PC-9 (cell line): ENCODE measurements at regions of chr7 and their contacts with region 1.

Region 1: DNA sequence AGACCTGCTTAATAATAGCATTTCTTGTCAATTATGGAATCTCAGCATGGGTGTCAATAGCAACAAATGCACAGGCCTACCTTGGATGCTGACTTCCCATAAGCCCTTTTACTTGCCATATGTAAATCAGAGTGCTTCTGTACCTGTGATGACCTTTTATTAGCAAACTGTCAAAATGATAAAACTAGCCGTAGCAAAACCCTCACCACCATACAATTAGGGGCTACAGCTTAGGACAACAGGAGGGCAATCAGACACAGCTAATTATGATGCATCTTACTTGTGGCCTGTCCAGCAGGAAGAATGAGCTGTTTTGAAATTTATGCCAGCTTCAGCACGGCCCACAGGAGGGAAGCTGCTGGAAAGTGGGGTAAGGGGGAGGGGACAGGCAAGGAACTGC is 201.6 kb downstream of the TAX1BP1 start:
- DNase-seq: no peak
- H3K4me3 ChIP-seq: no peak overlapping the region
- H3K27ac ChIP-seq: no peak overlapping the region
- H3K4me1 ChIP-seq: no peaks in the 10 kb centered on the region
- H3K27me3 ChIP-seq: no peaks in the 10 kb centered on the region
- CTCF ChIP-seq: no peak

Region 2: DNA sequence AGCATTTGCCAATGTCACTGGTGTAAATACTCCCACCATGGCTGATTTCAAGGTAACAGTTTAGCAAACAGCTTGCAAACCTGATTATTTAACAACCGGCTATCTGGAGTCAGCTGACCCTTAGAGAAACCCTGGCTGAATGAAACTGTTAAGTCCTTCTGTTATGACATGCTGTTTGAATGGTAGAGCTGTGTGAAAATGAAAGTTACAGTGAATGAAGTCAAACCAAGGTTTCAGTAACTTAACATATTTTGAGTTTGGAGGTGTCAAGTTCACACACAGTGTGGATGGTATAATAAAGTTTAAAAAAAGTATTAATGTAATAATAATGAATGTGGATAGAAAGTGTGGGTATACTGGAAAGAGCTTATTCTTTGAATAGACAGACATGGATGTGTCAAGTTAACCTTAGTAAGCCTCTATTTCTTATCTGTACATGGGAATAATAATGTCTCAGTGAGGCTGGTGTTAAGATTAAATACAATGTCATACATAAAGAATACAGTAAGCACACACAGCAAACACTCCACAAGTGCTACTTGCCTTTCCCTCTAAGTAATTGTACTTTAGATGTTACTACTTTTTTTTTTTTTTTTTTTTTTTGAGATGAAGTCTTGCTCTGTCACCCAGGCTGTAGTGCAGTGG is 51.2 kb before region 1 on chr7:
- CTCF ChIA-PET with region 1: no interaction called
- POLR2A ChIA-PET with region 1: interaction called, 12 read pairs
- intact Hi-C with region 1: no loop called
- DNase-seq: peak in 1 of 2 experiments; percentile 12
- H3K4me3 ChIP-seq: peak overlapping the region; percentile 33; the same call in 1 of the 2 replicates
- H3K27ac ChIP-seq: peak overlapping the region; percentile 65
- H3K4me1 ChIP-seq: peaks cover 25% of the 10 kb centered on the region
- H3K27me3 ChIP-seq: no peaks in the 10 kb centered on the region
- CTCF ChIP-seq: no peak

Region 3: GRCh38 chr7:27997188-27997707 is 55.7 kb after region 1 on chr7:
- CTCF ChIA-PET with region 1: interaction called, 16 read pairs
- POLR2A ChIA-PET with region 1: no interaction called
- intact Hi-C with region 1: no loop called
- DNase-seq: no peak
- H3K4me3 ChIP-seq: no peak overlapping the region
- H3K27ac ChIP-seq: no peak overlapping the region
- H3K4me1 ChIP-seq: no peaks in the 10 kb centered on the region
- H3K27me3 ChIP-seq: no peaks in the 10 kb centered on the region
- CTCF ChIP-seq: no peak

Region 4: DNA sequence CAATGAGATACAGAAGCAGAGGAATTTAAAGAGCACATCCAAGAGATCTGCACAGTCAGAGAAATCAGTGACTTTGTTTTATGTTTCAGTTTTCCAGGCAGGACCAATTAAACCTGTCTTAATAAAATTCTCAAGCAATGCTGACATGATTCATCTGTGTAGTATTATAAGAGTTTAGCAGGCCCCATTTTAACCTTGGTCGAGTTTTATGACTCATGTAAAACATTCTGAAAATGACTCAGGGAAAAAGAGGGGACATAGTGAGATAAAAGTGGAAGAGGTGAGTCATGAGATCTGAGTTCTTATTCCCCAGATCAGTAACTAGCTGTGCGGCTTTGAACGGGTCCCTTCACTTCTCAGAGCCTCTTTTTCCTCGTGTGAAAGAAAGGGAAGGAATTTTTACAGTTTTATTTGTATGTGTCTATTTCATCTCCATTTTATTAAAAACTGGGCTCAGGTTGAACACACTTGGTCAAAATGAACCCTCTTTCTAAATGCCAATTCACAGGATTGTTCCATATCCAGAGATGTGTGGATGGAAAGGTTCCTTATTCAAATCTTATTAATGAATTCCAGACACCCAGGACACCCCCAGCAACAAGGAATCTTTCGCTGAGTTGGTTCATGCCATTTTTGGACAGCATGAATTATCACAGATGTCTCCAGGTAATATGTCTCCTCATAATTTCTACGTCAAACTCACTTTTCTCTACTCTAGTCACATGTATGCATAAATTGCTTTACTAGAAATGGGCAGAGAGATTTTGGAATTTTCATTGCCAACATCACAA is 95.9 kb after region 1 on chr7:
- CTCF ChIA-PET with region 1: no interaction called
- POLR2A ChIA-PET with region 1: no interaction called
- intact Hi-C with region 1: no loop called
- DNase-seq: peak; percentile 43 to 100
- H3K4me3 ChIP-seq: peak overlapping the region; percentile 22; the same call in 1 of the 2 replicates
- H3K27ac ChIP-seq: peak overlapping the region; percentile 85
- H3K4me1 ChIP-seq: peaks cover 73% of the 10 kb centered on the region
- H3K27me3 ChIP-seq: no peaks in the 10 kb centered on the region
- CTCF ChIP-seq: no peak